HepG2 (cell line): ENCODE measurements at regions of chr2 and their contacts with region 1.

Region 1: GRCh38 chr2:54618646-54619565 is 104.6 kb upstream of the EML6 start:
- DNase-seq: peak; percentile 77
- ATAC-seq: peak; percentile 79
- H3K4me3 ChIP-seq: peak overlapping the region in 1 of 3 experiments; percentile 10; a peak in 1 of 6 replicates
- H3K27ac ChIP-seq: peak overlapping the region; percentile 81
- H3K4me1 ChIP-seq: peaks cover 64% of the 10 kb centered on the region
- H3K27me3 ChIP-seq: no peaks in the 10 kb centered on the region
- CTCF ChIP-seq: no peak
- EP300 ChIP-seq: peak in 1 of 2 experiments; percentile 89; a peak in 2 of 4 replicates
- POLR2A ChIP-seq: no peak
- RAD21 ChIP-seq: no peak; the same call in 1 of the 2 replicates

Region 2: GRCh38 chr2:54589340-54590215 is 29.3 kb before region 1 on chr2:
- CTCF ChIA-PET with region 1: no interaction called
- POLR2A ChIA-PET with region 1: interaction called, 15 read pairs
- in situ Hi-C with region 1: no loop called
- intact Hi-C with region 1: no loop called
- DNase-seq: peak; percentile 98
- ATAC-seq: peak; percentile 91
- H3K4me3 ChIP-seq: peak overlapping the region; percentile 22 to 55 (median 28)
- H3K27ac ChIP-seq: peak overlapping the region; percentile 92
- H3K4me1 ChIP-seq: peaks cover 90% of the 10 kb centered on the region
- H3K27me3 ChIP-seq: no peaks in the 10 kb centered on the region
- CTCF ChIP-seq: no peak
- EP300 ChIP-seq: peak; percentile 71 to 84
- POLR2A ChIP-seq: peak; percentile 39 to 57; a peak in 3 of 4 replicates
- RAD21 ChIP-seq: no peak

Region 3: DNA sequence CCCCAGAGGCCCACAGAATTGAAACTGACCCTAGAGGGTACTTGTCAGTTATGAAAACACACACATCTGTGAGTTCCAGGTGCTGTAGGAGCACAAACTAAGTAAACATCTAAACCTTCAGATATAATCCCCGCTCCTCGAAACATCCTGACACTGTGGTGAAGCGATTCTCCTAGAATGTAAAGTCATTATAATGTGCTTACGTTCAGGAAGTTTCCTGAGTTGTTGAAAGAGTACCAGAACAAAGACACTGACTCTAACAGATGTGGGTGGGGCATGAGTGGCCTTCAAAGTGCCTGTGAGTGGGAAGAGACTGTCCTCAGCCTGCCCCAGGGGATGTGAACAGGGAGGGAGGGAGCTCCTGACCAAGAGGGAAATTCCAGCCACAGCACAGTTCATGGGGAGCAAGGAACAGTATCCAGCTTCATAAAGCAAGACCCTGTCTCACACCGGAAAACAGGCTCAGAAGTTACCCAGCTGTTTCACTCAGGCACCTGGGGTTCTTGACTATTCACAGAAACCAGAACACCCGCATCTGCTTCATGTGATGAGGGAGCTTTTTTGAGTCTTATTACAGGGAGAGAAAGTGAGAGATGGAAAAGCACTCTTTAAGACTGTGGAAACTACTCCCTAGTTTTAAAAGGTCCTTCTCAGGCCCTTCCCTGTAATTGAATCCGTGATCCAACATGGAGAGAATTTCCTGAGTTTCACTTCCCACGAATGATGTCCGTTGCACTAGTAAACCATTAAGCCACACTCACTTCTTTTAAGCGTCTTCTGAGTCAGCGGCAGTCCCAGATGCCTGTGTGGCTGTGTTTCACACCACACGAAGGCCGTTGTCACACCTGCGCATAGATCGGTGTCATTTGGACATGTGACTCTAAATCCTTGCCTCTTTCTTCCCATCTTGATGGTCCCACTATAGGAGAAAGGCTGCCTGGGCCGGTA is 15.9 kb after region 1 on chr2:
- CTCF ChIA-PET with region 1: no interaction called
- POLR2A ChIA-PET with region 1: interaction called, 20 read pairs
- in situ Hi-C with region 1: no loop called
- intact Hi-C with region 1: no loop called
- DNase-seq: no peak
- ATAC-seq: peak; percentile 24
- H3K4me3 ChIP-seq: no peak overlapping the region
- H3K27ac ChIP-seq: no peak overlapping the region
- H3K4me1 ChIP-seq: peaks cover 37% of the 10 kb centered on the region
- H3K27me3 ChIP-seq: no peaks in the 10 kb centered on the region
- CTCF ChIP-seq: no peak
- EP300 ChIP-seq: no peak
- POLR2A ChIP-seq: peak in 1 of 2 experiments; percentile 27; a peak in 1 of 4 replicates
- RAD21 ChIP-seq: no peak